ENCODE measurements at regions of chr3 and their contacts with region 1.

Region 1: DNA sequence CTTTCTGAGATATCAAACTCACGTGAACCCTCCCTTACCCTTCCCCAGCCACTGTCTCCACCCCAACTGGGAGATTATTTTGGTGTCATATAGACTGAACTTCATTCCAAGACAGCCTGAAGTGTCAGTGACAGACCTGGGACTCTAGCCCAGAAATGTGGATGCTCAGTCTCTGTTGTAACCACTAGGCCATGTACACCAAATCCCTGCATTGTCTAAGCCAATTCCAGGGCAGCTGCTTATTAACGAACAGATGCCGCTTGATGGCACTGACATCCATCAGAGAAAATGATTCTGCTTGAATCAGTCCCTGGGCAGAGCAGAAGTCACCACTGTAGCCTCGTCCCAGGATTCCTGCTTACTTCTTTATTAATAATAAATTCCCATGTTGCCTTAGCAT is 305.5 kb downstream of the GRM7 start:
- DNase-seq: peak; percentile 75

Region 2: GRCh38 chr3:7285505-7285904 is 119.0 kb after region 1 on chr3:
- intact Hi-C with region 1: loop called (anchors 10 kb)
- DNase-seq: no peak